ENCODE measurements at regions of chr14 and their contacts with region 1.

Region 1: DNA sequence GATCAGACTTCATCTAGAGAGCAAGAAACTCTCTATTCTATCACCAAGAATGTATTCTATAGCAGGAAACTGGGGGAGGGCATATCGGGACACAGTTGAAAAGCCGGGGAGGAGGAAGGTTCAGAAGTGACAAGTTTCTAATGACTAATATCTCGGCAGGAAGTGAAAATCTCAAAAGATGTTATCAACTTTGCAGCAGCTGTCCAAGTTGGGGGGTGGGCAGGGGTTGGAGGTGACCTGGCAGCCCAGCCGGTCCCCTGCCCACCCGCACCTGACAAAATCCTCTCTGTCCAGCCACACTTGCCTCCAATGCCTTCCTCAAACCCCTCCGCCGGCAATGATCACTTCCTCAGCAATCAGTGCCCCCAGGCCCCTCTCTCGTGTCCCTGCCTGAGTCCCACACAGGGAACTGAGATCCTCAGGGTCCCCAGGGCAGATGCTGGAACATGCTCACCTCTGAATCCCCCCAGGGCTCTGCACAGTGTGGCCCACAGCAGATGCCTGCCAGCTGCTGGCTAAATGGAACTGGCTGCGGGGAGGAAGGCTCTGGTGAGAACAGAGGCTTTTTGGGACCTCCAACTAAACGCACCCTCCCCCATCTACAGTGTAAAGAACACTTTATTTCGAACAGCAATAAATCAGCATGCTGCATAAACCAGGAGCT is 43.9 kb downstream of the CCDC88C start:
- DNase-seq: peak; percentile 68
- H3K4me3 Mint-ChIP-seq: peak overlapping the region; percentile 60
- H3K27ac Mint-ChIP-seq: peak overlapping the region; percentile 87
- H3K4me1 Mint-ChIP-seq: peaks cover 99% of the 10 kb centered on the region
- H3K27me3 Mint-ChIP-seq: no peaks in the 10 kb centered on the region

Region 2: GRCh38 chr14:91350813-91351511 is 22.8 kb before region 1 on chr14:
- CTCF ChIA-PET with region 1: interaction called, 11 read pairs
- POLR2A ChIA-PET with region 1: no interaction called
- DNase-seq: peak; percentile 81
- H3K4me3 Mint-ChIP-seq: peak overlapping the region; percentile 75
- H3K27ac Mint-ChIP-seq: peak overlapping the region; percentile 94
- H3K4me1 Mint-ChIP-seq: peaks cover 91% of the 10 kb centered on the region
- H3K27me3 Mint-ChIP-seq: no peaks in the 10 kb centered on the region

Region 3: GRCh38 chr14:91361233-91362063 is 12.3 kb before region 1 on chr14:
- CTCF ChIA-PET with region 1: interaction called, 12 read pairs
- POLR2A ChIA-PET with region 1: interaction called, 3 read pairs
- DNase-seq: no peak
- H3K4me3 Mint-ChIP-seq: no peak overlapping the region
- H3K27ac Mint-ChIP-seq: peak overlapping the region; percentile 36
- H3K4me1 Mint-ChIP-seq: peaks cover 55% of the 10 kb centered on the region
- H3K27me3 Mint-ChIP-seq: no peaks in the 10 kb centered on the region

Region 4: GRCh38 chr14:91636604-91637003 is 262.9 kb after region 1 on chr14:
- CTCF ChIA-PET with region 1: no interaction called
- POLR2A ChIA-PET with region 1: no interaction called
- DNase-seq: no peak
- H3K4me3 Mint-ChIP-seq: no peak overlapping the region
- H3K27ac Mint-ChIP-seq: no peak overlapping the region
- H3K4me1 Mint-ChIP-seq: no peaks in the 10 kb centered on the region
- H3K27me3 Mint-ChIP-seq: peaks cover 4% of the 10 kb centered on the region

Region 5: DNA sequence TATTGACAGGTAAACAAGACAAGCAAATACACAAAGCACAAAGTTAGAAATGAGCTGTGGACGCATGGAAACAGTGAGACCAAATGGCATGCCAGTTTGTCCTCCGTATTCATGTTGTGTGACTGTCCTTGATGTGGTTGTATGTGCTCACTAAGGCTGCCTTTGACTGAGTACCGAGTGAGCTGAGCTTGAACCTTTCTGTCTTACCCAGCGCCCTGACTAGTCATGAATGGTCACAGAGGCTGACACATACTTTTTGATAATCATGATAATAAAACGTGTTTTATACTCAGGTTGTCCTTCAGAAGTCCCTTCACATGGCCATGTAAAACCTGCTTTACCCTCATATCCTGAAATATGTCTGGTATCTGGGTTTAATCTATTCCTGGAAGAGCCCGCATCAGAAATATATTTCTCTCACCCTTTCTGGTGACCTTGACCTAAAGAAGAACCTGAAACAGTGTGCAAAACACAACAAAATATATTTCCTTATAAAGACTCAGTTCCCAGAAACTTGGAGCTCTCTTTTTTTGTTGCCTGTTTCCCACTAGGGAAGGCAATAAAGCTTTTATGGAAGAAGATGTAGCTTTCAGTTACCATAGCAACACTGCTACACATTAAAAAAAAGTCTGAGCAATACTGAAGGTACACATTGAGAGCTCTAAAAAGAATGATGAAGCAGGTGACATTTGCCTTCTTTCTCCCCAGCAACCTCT is 358.9 kb after region 1 on chr14:
- CTCF ChIA-PET with region 1: no interaction called
- POLR2A ChIA-PET with region 1: no interaction called
- DNase-seq: no peak
- H3K4me3 Mint-ChIP-seq: no peak overlapping the region
- H3K27ac Mint-ChIP-seq: no peak overlapping the region
- H3K4me1 Mint-ChIP-seq: peaks cover 4% of the 10 kb centered on the region
- H3K27me3 Mint-ChIP-seq: no peaks in the 10 kb centered on the region

Measured in activated CD4-positive, alpha-beta T cell treated with anti-CD3 and anti-CD28 coated beads, Interleukin-2, amount 10 ng/mL, durations not matched to agents 7 days and 5 days (primary cell).